Sigmoid colon (tissue), 7 donors: ENCODE measurements at regions of chr1 and their contacts with region 1.

Region 1: GRCh38 chr1:184399192-184399847 is 12.5 kb downstream of the C1orf21 start:
- DNase-seq: no peak
- H3K4me3 ChIP-seq: no peak overlapping the region
- H3K27ac ChIP-seq: no peak overlapping the region
- H3K4me1 ChIP-seq: peaks cover 0 to 31% (median 14%) of the 10 kb centered on the region in 4 donors
- H3K27me3 ChIP-seq: no peaks in the 10 kb centered on the region
- CTCF ChIP-seq: no peak
- EP300 ChIP-seq: no peak
- POLR2A ChIP-seq: no peak

Region 2: DNA sequence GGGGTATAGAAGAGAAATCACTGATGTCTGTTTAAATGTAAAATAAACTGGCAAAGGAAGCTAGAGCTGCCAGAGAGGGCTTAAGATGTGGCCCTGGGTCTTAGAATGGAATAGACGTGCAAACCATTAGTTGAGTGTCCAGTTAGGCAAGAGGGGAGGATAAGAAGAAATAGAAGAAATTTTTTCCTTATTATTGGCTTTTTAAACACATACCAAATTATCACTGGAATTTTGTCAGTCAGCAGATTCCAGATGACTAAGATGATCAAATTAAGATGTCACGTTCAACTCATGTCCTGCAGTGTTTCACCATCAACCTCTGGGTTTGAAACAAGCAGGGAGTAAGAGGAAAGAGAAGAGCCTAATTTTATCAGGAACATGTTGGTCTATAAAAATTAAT is 84.1 kb before region 1 on chr1:
- intact Hi-C with region 1: no loop called
- DNase-seq: no peak
- H3K4me3 ChIP-seq: no peak overlapping the region
- H3K27ac ChIP-seq: no peak overlapping the region
- H3K4me1 ChIP-seq: no peaks in the 10 kb centered on the region
- H3K27me3 ChIP-seq: no peaks in the 10 kb centered on the region
- CTCF ChIP-seq: no peak
- EP300 ChIP-seq: no peak
- POLR2A ChIP-seq: no peak

Region 3: DNA sequence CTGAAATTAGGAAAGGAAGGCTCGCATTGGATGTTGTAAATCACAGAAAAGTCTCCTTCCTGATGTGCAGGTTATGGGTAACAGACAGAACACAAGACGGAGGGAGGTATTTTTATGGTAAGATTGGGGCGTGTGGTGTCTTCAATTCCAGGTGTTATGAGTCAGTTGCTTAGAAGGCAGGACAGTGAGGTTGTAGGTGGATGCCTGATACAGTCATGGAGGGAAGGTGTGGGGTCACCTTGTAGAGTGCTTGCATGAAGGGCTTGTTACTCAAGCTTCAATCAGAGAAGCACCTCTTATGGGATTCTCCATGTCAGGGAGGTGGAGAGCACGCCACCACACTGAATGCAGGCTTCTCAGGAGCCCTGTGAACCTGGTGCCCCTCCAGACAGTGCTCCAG is 50.6 kb after region 1 on chr1:
- intact Hi-C with region 1: loop called (anchors 5 kb)
- DNase-seq: no peak
- H3K4me3 ChIP-seq: no peak overlapping the region
- H3K27ac ChIP-seq: no peak overlapping the region
- H3K4me1 ChIP-seq: peaks cover 0 to 20% (median 6%) of the 10 kb centered on the region in 4 donors
- H3K27me3 ChIP-seq: no peaks in the 10 kb centered on the region
- CTCF ChIP-seq: no peak
- EP300 ChIP-seq: no peak
- POLR2A ChIP-seq: no peak

Region 4: DNA sequence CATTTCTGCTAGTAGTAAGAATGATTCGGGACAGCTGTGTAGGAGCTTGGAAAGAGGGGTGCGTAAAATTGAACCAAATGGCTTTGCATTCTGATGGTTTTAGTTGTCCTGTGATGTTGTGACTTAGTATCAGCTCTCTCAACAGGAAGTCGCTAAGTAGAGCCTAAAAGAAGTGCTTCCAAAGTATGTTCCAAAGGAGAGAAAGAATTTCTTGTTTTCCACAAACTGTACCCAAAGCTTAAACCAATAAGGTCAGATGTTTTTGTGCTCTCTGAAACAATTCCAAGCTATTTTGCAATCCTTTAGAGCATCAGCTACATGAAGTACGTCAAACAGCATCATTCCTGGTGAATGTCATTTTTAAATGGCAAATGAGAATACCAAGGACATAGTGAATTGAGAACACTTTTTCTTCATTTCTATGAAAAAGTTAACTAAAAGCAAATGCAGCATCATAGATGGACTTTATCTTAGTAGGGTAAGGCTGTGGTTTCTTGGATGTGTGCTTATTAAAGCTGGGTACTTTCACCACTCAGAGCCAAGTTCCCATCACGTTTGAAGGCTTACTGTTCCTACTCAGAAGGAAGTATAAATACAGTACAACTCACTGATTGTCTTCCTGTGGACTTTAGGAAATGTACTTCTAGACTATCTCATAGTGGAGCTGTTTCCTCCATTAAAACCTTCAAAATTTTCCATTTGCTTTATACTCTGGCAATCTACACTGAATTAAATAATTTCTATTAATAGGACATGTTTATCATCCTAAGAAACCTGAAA is 136.1 kb after region 1 on chr1:
- intact Hi-C with region 1: loop called (anchors 10 kb)
- DNase-seq: no peak
- H3K4me3 ChIP-seq: no peak overlapping the region
- H3K27ac ChIP-seq: peak overlapping the region; percentile 54 to 75 (median 69)
- H3K4me1 ChIP-seq: peaks cover 0 to 49% (median 25%) of the 10 kb centered on the region in 4 donors
- H3K27me3 ChIP-seq: no peaks in the 10 kb centered on the region
- CTCF ChIP-seq: no peak
- EP300 ChIP-seq: peak in 3 of 4 donors; percentile 46 to 84 (median 62)
- POLR2A ChIP-seq: no peak